ENCODE measurements at regions of chr7 and their contacts with region 1.

Region 1: DNA sequence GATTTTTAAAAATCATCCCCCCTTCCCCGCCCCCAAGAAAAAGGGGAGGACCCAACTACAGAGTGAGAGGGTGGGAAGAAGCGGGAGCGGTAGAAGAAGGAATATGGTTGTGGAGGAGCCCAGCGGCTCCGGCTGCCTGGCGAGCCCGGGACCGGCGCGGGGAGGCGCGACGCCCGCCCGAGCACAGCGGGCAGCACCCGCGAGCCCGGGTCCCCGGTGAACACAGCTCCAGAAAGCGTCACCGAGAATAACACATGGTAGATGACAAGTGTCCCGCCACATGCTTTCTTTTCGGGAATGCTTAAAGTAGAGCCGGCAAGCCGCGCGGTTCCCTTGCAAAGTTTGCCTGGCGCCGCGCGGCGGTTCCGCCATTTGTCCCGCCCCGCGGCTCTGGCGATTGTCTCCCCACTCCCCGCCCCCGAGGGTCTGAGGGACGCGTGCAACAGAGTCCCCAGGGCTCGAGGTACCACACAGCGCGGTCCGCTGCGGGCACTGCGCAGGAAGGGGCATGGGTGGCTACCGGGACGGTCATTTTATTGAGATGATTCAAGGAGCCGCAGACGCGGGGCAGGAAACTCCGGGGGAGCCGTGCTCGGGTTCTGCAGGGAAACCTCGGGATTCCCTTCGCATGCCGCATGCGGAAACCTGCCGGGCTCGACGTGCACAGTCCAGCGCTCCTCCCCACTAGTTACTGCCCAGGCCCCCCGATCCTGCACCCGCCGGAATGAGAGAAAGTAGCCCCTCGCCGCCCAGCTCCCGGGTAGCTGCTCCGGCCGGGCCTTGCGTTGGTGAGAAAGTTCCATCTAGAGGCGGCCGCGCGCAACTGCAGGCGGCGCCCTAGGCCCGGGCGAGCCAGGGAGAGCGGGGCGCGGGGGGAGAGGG is 781 bp upstream of the GRM8 start:
- DNase-seq: no peak
- ATAC-seq: peak; percentile 94
- H3K4me3 ChIP-seq: peak overlapping the region; percentile 76
- H3K27ac ChIP-seq: no peak overlapping the region
- H3K4me1 ChIP-seq: peaks cover 10% of the 10 kb centered on the region
- H3K27me3 ChIP-seq: peaks cover 5 to 31% of the 10 kb centered on the region in 2 experiments
- CTCF ChIP-seq: peak; percentile 77 to 97 (median 87)
- EP300 ChIP-seq: no peak
- POLR2A ChIP-seq: no peak
- RAD21 ChIP-seq: peak; percentile 71

Region 2: GRCh38 chr7:127107601-127108007 is 145.9 kb before region 1 on chr7:
- CTCF ChIA-PET with region 1: interaction called, 10 read pairs
- POLR2A ChIA-PET with region 1: no interaction called
- RAD21 ChIA-PET with region 1: interaction called, 5 read pairs
- SMC1A ChIA-PET with region 1: no interaction called
- in situ Hi-C with region 1: no loop called
- intact Hi-C with region 1: loop called (anchors 2 kb)
- DNase-seq: peak; percentile 8
- ATAC-seq: peak; percentile 84
- H3K4me3 ChIP-seq: no peak overlapping the region
- H3K27ac ChIP-seq: no peak overlapping the region
- H3K4me1 ChIP-seq: no peaks in the 10 kb centered on the region
- H3K27me3 ChIP-seq: no peaks in the 10 kb centered on the region
- CTCF ChIP-seq: peak in 2 of 3 experiments; percentile 44 to 60; a peak in 4 of 6 replicates
- EP300 ChIP-seq: no peak
- POLR2A ChIP-seq: no peak
- RAD21 ChIP-seq: no peak